H1 (cell line): ENCODE measurements at regions of chr19 and their contacts with region 1.

Region 1: DNA sequence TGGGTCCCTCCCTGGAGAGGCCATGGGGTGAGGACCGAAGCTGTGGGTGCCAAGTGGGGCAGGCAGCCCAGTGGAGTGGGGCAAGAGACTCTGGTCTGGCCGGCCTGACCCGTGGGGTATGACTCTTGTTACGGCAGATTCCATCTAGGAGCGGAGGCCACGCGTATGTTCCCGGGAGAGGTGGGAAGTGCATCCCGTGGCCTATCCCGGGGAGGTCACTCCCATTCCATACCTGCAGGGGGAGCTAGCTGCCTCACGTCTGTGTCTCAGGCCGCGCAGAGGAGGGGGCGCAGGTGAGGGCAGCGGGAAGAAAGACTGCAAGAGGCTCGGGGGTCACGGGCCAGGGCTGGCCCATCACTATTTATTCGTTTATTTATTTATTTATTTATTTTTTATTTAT is 4.9 kb downstream of the CSNK1G2 start:
- DNase-seq: peak in 1 of 2 experiments; percentile 92
- H3K4me3 ChIP-seq: no peak overlapping the region
- H3K27ac ChIP-seq: no peak overlapping the region
- H3K4me1 ChIP-seq: peaks cover 0 to 19% (median 9%) of the 10 kb centered on the region in 4 experiments; a peak in 6 of 7 replicates
- H3K27me3 ChIP-seq: no peaks in the 10 kb centered on the region
- CTCF ChIP-seq: peak; percentile 81 to 97 (median 89)
- EP300 ChIP-seq: no peak
- POLR2A ChIP-seq: no peak
- RAD21 ChIP-seq: peak; percentile 66 to 73

Region 2: GRCh38 chr19:1929021-1929742 is 16.7 kb before region 1 on chr19:
- CTCF ChIA-PET with region 1: interaction called, 21 read pairs
- POLR2A ChIA-PET with region 1: interaction called, 5 read pairs
- DNase-seq: peak in 1 of 2 experiments; percentile 95
- H3K4me3 ChIP-seq: peak overlapping the region in 3 of 4 experiments; percentile 20 to 52 (median 36); a peak in 5 of 8 replicates
- H3K27ac ChIP-seq: no peak overlapping the region
- H3K4me1 ChIP-seq: peaks cover 0 to 8% (median 4%) of the 10 kb centered on the region in 4 experiments; a peak in 4 of 7 replicates
- H3K27me3 ChIP-seq: no peaks in the 10 kb centered on the region; a peak in 1 of 7 replicates
- CTCF ChIP-seq: peak; percentile 83 to 89 (median 89)
- EP300 ChIP-seq: no peak
- POLR2A ChIP-seq: no peak
- RAD21 ChIP-seq: peak; percentile 72 to 84

Region 3: GRCh38 chr19:1956868-1957492 is 11.1 kb after region 1 on chr19:
- CTCF ChIA-PET with region 1: interaction called, 23 read pairs
- POLR2A ChIA-PET with region 1: interaction called, 4 read pairs
- DNase-seq: peak in 1 of 2 experiments; percentile 81
- H3K4me3 ChIP-seq: no peak overlapping the region
- H3K27ac ChIP-seq: no peak overlapping the region
- H3K4me1 ChIP-seq: peaks cover 0 to 14% (median 9%) of the 10 kb centered on the region in 4 experiments; a peak in 5 of 7 replicates
- H3K27me3 ChIP-seq: no peaks in the 10 kb centered on the region
- CTCF ChIP-seq: peak; percentile 47 to 80 (median 68)
- EP300 ChIP-seq: no peak
- POLR2A ChIP-seq: no peak
- RAD21 ChIP-seq: peak; percentile 29 to 40; a peak in 3 of 4 replicates

Region 4: GRCh38 chr19:1977120-1977519 is 31.2 kb after region 1 on chr19:
- CTCF ChIA-PET with region 1: interaction called, 13 read pairs
- POLR2A ChIA-PET with region 1: interaction called, 3 read pairs
- DNase-seq: no peak
- H3K4me3 ChIP-seq: no peak overlapping the region
- H3K27ac ChIP-seq: no peak overlapping the region
- H3K4me1 ChIP-seq: no peaks in the 10 kb centered on the region
- H3K27me3 ChIP-seq: no peaks in the 10 kb centered on the region
- CTCF ChIP-seq: no peak
- EP300 ChIP-seq: no peak
- POLR2A ChIP-seq: no peak
- RAD21 ChIP-seq: no peak